CD4-positive, alpha-beta T cell (primary cell): ENCODE measurements at regions of chr1 and their contacts with region 1.

Region 1: GRCh38 chr1:83920320-83920719 is 78.6 kb downstream of the TTLL7 start:
- DNase-seq: no peak
- ATAC-seq: no peak
- H3K4me3 ChIP-seq: no peak overlapping the region
- H3K4me3 Mint-ChIP-seq: no peak overlapping the region
- H3K27ac ChIP-seq: no peak overlapping the region
- H3K27ac Mint-ChIP-seq: no peak overlapping the region
- H3K4me1 ChIP-seq: no peaks in the 10 kb centered on the region
- H3K4me1 Mint-ChIP-seq: no peaks in the 10 kb centered on the region
- H3K27me3 ChIP-seq: peaks cover 0 to 4% of the 10 kb centered on the region in 2 experiments
- H3K27me3 Mint-ChIP-seq: peaks cover 6% of the 10 kb centered on the region
- CTCF ChIP-seq: no peak

Region 2: DNA sequence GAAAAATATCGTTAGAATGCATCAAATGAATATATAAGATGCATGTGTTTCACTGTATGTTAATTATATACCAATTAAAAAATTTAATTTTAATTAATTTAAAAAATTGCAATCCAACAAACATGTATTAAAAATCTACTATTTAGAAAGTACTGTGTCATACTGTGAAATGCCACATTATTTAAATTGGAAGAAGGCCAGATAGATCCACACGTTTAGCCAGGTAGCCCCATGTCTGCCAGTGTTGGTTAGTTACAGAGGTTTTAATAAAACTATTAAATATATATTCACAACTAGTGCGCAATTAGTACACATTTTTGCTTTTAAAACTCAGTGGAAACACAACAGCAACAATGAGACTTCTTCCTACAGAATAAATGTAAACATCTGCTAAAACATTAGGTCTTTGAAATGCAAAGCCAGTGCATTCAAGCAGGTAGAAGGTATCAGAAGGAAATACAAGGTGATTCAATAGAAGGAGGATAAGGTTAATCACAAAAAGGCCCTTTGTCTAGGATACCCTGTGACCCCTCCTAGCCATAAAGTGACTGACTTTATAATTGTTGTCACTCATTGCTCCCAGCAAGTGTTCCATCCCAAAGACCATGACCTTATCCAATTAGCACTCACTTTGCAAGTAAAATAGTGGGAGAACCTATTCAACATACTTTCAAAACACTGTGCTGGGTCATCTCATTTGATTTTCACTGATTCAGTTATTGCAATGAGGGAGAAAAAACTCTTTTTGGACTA is 132.9 kb before region 1 on chr1:
- CTCF ChIA-PET with region 1: no interaction called
- POLR2A ChIA-PET with region 1: no interaction called
- intact Hi-C with region 1: no loop called
- DNase-seq: no peak
- ATAC-seq: no peak
- H3K4me3 ChIP-seq: no peak overlapping the region
- H3K4me3 Mint-ChIP-seq: no peak overlapping the region
- H3K27ac ChIP-seq: no peak overlapping the region
- H3K27ac Mint-ChIP-seq: no peak overlapping the region
- H3K4me1 ChIP-seq: no peaks in the 10 kb centered on the region
- H3K4me1 Mint-ChIP-seq: no peaks in the 10 kb centered on the region
- H3K27me3 ChIP-seq: no peaks in the 10 kb centered on the region
- H3K27me3 Mint-ChIP-seq: no peaks in the 10 kb centered on the region
- CTCF ChIP-seq: no peak

Region 3: DNA sequence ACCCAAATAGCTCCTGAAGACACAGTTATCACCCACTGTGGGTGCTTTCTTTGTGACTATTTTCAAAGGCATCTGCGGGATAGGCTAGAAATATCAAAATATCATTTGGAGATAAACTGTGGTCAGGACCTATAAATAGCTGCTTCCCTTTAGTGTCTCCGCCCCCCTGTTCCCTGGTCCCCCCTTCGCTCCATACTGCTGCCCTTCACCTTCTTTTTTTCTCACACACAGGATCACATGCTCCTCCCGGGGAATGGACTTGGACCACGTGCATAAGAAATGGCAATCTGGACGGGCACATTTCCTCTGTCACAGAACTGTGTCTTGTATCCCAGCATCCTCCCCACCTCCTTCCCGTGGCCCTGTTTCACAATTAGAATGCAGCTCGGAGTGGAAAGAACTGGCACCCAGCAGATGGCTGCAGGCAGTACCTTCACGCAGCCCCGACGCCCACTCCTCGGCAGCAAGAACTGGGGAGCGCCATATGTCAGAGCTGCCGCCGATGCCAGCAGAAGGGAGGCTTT is 838.7 kb after region 1 on chr1:
- CTCF ChIA-PET with region 1: no interaction called
- POLR2A ChIA-PET with region 1: no interaction called
- intact Hi-C with region 1: loop called in 1 of 2 experiments (anchors 5 kb)
- DNase-seq: no peak
- ATAC-seq: no peak
- H3K4me3 ChIP-seq: peak overlapping the region; percentile 13
- H3K4me3 Mint-ChIP-seq: peak overlapping the region; percentile 2
- H3K27ac ChIP-seq: no peak overlapping the region
- H3K27ac Mint-ChIP-seq: no peak overlapping the region
- H3K4me1 ChIP-seq: peaks cover 7% of the 10 kb centered on the region
- H3K4me1 Mint-ChIP-seq: peaks cover 9% of the 10 kb centered on the region
- H3K27me3 ChIP-seq: peaks cover 0 to 5% of the 10 kb centered on the region in 2 experiments
- H3K27me3 Mint-ChIP-seq: peaks cover 6% of the 10 kb centered on the region
- CTCF ChIP-seq: no peak